H1 (cell line): ENCODE measurements at regions of chr9 and their contacts with region 1.

Region 1: DNA sequence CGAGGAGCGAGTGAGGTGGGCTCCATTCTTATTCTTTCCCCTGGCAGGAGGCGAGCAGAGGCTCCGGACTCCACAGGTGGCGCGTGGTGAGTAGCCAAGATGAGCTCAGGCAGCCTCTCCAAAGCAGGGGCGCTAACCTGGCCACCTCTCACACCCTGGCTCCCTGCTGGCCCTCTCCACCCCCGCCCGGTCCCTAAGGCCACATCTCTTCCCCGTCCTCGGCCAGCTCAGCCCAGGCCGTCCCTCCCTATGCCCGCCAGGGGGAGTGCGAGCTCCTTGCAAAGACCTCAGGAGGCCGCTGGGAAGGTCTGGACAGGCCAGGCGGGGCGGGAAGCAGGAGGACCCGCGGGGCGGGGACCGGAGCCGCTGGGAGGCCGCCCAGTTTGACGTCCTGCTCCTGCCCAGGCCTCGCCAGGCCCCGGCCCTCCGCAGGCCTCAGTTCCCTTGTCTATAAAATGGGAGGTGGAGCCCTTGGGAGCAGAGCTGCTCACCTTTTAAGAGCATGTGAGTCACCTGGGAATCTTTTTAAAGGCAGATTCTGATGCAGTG is 46.3 kb upstream of the GGTA1 start:
- DNase-seq: peak; percentile 87 to 97
- H3K4me3 ChIP-seq: peak overlapping the region in 1 of 4 experiments; percentile 42; a peak in 3 of 8 replicates
- H3K27ac ChIP-seq: no peak overlapping the region
- H3K4me1 ChIP-seq: peaks cover 0 to 5% (median under 1%) of the 10 kb centered on the region in 4 experiments; a peak in 2 of 7 replicates
- H3K27me3 ChIP-seq: peaks cover 0 to 6% (median 4%) of the 10 kb centered on the region in 4 experiments; a peak in 3 of 7 replicates
- CTCF ChIP-seq: peak; percentile 93 to 98 (median 97)
- EP300 ChIP-seq: peak in 1 of 2 experiments; percentile 22; a peak in 1 of 3 replicates
- POLR2A ChIP-seq: no peak
- RAD21 ChIP-seq: peak; percentile 95 to 99

Region 2: DNA sequence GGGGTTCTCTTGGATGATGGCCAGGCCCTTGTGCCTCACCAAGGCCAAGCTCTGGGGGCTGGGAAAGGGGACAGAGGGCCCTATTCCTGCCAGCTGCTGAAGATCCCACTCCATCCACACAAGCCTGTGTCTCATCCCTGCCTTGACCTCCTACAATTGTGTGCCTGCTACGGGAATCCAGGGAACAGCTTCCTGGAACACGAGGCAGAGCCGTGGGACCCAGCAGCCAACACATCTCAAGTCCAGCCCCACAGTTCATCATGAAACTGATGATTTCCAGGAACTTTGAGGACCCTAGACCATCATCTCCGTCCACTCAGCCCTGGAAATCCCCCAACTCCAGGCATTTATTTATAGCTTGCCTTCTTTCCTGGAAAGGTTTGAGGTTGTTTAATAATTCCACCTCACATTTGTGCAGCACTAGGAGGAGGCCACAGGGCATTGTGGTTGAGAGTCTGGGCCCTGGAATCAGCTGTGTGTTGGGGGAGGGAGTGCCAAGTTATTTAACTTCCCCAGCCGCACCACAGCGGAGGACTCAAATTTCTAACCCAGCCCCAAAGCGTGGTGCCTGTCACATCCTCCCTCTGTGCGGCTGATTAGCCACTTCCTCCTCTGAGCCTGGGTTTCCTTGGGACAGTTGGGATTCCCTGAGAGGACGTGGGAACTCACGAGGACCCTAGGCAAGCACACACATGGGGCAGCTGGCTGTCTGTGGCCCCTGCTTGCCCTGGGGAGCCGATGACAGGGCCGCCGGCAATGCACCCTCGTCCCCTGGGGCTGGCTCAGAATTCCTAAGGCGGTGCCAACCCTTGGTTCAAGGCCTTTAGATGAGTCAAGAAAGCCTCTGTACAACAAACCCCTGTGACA is 11.9 kb after region 1 on chr9:
- CTCF ChIA-PET with region 1: interaction called, 30 read pairs
- POLR2A ChIA-PET with region 1: no interaction called
- DNase-seq: no peak
- H3K4me3 ChIP-seq: 0 out of 8 replicates have a peak overlapping the region, but pooled peaks of 1 of the 4 experiments have one; percentile 4
- H3K27ac ChIP-seq: no peak overlapping the region
- H3K4me1 ChIP-seq: peaks cover 0 to 13% (median 9%) of the 10 kb centered on the region in 4 experiments; a peak in 5 of 7 replicates
- H3K27me3 ChIP-seq: no peaks in the 10 kb centered on the region; a peak in 1 of 7 replicates
- CTCF ChIP-seq: no peak
- EP300 ChIP-seq: no peak
- POLR2A ChIP-seq: no peak
- RAD21 ChIP-seq: no peak

Region 3: GRCh38 chr9:121566481-121567465 is 20.8 kb after region 1 on chr9:
- CTCF ChIA-PET with region 1: interaction called, 18 read pairs
- POLR2A ChIA-PET with region 1: no interaction called
- DNase-seq: no peak
- H3K4me3 ChIP-seq: no peak overlapping the region
- H3K27ac ChIP-seq: no peak overlapping the region
- H3K4me1 ChIP-seq: peaks cover 0 to 10% (median 0%) of the 10 kb centered on the region in 4 experiments; a peak in 2 of 7 replicates
- H3K27me3 ChIP-seq: no peaks in the 10 kb centered on the region
- CTCF ChIP-seq: no peak
- EP300 ChIP-seq: no peak
- POLR2A ChIP-seq: no peak
- RAD21 ChIP-seq: no peak

Region 4: DNA sequence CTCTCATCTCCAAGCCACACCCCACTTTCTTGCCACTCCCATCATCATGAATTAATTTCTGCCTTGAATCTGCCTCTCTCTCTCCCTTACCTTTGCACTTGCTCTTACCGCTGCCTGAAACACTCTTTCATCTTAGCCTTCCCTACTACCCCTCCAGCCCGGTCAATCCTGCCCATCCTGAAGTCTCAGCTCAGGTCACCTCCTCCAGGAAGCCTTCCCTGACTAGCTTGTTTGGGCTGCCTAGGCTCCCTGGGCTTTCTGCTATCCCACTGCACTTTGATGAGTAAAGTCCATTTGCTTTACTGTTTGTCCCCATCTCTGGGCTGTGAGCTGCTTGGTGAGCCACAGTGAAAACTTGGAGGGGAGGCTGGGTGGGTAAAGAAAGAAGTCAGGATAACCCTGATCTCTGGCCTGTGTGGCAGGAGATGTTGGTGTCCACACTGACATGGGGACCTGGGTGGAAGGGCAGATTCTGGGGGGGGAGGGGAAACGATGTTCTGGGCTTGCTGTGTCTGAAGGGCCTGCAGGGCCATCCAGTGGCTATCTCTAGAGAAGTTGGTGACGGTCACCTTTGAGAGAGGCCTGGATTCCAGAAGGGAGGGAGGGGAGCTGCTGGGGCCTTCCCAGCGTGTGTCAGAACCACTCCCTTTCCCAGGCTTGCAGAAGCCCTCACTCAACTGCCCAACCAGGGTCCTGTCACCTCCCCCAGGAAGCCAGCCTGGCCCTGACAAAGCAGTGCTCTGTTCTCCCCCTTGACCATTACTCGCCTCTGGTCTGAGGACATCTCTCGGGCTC is 30.5 kb after region 1 on chr9:
- CTCF ChIA-PET with region 1: interaction called, 16 read pairs
- POLR2A ChIA-PET with region 1: interaction called, 4 read pairs
- DNase-seq: no peak
- H3K4me3 ChIP-seq: no peak overlapping the region
- H3K27ac ChIP-seq: no peak overlapping the region
- H3K4me1 ChIP-seq: peaks cover 0 to 5% (median 2%) of the 10 kb centered on the region in 4 experiments; a peak in 3 of 7 replicates
- H3K27me3 ChIP-seq: no peaks in the 10 kb centered on the region; a peak in 2 of 7 replicates
- CTCF ChIP-seq: no peak
- EP300 ChIP-seq: no peak
- POLR2A ChIP-seq: no peak
- RAD21 ChIP-seq: peak in 1 of 2 experiments; percentile 22; a peak in 2 of 4 replicates

Region 5: GRCh38 chr9:121581786-121582600 is 36.0 kb after region 1 on chr9:
- CTCF ChIA-PET with region 1: interaction called, 12 read pairs
- POLR2A ChIA-PET with region 1: interaction called, 4 read pairs
- DNase-seq: peak in 1 of 2 experiments; percentile 60
- H3K4me3 ChIP-seq: no peak overlapping the region
- H3K27ac ChIP-seq: no peak overlapping the region
- H3K4me1 ChIP-seq: peaks cover 0 to 16% (median 12%) of the 10 kb centered on the region in 4 experiments; a peak in 6 of 7 replicates
- H3K27me3 ChIP-seq: no peaks in the 10 kb centered on the region; a peak in 1 of 7 replicates
- CTCF ChIP-seq: no peak
- EP300 ChIP-seq: no peak
- POLR2A ChIP-seq: no peak
- RAD21 ChIP-seq: no peak

Region 6: DNA sequence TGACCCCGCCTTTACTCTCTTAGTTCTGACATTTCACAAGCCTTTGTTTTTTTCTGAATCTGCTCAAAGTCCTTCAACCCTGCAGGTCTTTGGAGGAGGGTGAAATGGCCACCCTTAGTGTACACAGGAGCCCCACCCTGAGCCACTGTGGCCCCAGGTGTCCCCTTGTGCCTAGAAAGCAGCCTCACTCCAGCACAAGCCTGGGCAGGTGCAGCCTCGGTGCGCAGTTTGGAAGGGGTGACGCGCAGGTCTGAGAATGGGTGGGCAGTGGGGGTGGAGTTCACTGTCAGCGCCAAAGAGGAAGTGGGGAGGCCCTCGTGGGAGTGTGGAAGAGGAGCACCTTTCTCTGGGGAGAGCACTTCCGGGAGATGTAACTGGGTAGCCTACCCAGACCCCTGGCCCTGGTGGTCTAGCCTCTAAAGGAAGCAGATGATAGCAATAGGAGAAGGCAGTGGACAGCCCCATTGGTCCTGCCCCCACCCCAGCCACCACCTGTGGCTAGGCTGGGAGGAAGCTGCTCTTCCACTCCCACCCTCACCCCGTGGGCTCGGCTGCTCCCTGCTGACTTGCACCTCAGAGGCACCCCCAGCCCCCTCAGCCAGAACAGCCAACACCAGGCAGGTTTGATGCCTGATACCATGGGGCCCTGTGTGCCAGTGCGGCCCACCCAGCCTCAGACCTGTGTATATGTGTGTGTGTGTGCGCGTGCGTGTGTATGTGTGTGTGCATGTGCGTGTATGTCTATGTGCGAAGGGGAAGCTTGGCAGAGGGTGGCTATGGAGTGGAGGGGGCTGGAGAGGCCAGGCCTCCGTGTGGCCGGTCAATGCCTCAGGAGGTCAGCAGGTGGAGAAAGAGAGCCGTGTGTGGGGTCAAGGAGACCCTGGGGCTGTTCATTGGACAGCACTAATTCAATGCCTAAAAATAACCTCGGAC is 88.6 kb after region 1 on chr9:
- CTCF ChIA-PET with region 1: interaction called, 13 read pairs
- POLR2A ChIA-PET with region 1: no interaction called
- DNase-seq: peak in 1 of 2 experiments; percentile 80
- H3K4me3 ChIP-seq: no peak overlapping the region
- H3K27ac ChIP-seq: no peak overlapping the region
- H3K4me1 ChIP-seq: peaks cover 0 to 16% (median 11%) of the 10 kb centered on the region in 4 experiments; a peak in 5 of 7 replicates
- H3K27me3 ChIP-seq: no peaks in the 10 kb centered on the region
- CTCF ChIP-seq: peak; percentile 84 to 90 (median 84)
- EP300 ChIP-seq: no peak
- POLR2A ChIP-seq: no peak
- RAD21 ChIP-seq: peak; percentile 87 to 88

Region 7: GRCh38 chr9:121698627-121699570 is 152.9 kb after region 1 on chr9:
- CTCF ChIA-PET with region 1: interaction called, 55 read pairs
- POLR2A ChIA-PET with region 1: interaction called, 3 read pairs
- DNase-seq: peak in 1 of 2 experiments; percentile 86
- H3K4me3 ChIP-seq: peak overlapping the region; percentile 54 to 68 (median 61)
- H3K27ac ChIP-seq: no peak overlapping the region
- H3K4me1 ChIP-seq: peaks cover 4 to 13% (median 12%) of the 10 kb centered on the region in 4 experiments
- H3K27me3 ChIP-seq: peaks cover 0 to 5% (median 0%) of the 10 kb centered on the region in 4 experiments; a peak in 4 of 7 replicates
- CTCF ChIP-seq: no peak
- EP300 ChIP-seq: no peak
- POLR2A ChIP-seq: no peak
- RAD21 ChIP-seq: no peak